ENCODE measurements at regions of chr7 and their contacts with region 1.

Region 1: DNA sequence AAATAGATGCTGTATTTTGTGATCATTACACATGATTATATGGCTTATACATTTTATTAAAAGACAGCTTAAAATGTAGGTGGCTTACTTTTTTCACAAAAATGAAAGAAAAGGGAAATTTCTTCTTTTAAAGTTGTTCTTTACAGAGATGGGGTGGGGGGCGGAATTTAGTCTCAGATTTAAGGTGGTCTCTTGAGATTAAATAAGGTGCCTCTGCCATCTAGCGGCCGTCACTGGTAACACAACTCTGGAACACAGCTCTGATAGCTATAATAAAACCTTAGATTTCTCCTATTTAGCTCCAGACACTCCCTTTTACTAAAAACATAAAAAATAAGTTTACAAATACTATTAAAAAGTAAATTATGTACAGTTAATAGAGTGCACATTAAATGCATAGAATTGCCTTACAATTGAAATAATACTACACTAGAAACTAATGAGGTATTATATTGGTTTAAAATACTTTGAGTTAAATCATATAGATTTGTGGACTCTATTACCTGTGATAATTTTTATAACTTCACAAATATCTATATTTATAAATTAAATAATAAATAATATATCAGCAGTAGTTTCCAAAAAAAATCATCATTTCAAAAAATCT is 210.9 kb downstream of the DGKB start:
- DNase-seq: peak; percentile 5
- H3K27ac ChIP-seq: no peak overlapping the region
- CTCF ChIP-seq: peak; percentile 91

Region 2: DNA sequence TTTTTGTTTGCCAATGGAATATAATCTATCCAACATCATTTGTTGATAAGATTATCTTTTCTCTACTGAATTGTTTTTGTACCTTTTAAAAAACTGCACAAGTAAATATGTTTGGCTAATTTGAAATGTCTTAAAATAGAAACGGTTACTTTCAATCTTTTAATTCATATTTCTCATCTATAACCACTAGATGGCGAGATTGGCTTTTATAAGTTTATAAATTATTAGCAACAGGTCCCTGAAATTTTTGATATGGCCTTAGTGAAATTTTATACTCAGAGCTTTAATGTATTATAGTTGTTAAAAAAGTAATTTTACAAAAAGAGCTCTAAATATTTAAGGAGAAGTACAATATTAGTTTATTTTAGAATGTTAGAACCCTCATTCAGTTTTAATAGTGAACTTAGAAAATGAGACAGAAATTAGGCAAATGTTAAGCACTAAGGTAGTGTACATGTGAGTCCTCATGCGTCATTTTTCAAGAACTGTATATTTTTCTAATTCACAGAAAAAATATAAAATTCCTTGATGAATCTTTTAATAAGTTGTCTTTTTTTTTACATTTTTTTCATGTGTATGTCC is 1411.8 kb before region 1 on chr7:
- CTCF ChIA-PET with region 1: interaction called, 17 read pairs
- POLR2A ChIA-PET with region 1: no interaction called
- DNase-seq: peak; percentile 8
- H3K27ac ChIP-seq: no peak overlapping the region
- CTCF ChIP-seq: peak; percentile 54